Activated CD8-positive, alpha-beta T cell treated with anti-CD3 and anti-CD28 coated beads, Interleukin-2, amount 10 ng/mL, durations not matched to agents 7 days and 5 days (primary cell): ENCODE measurements at regions of chr2 and their contacts with region 1.

Region 1: GRCh38 chr2:170235860-170236679 is 58.1 kb downstream of the MYO3B start:
- DNase-seq: peak; percentile 36
- ATAC-seq: no peak
- H3K4me3 Mint-ChIP-seq: no peak overlapping the region
- H3K27ac Mint-ChIP-seq: no peak overlapping the region
- H3K4me1 Mint-ChIP-seq: no peaks in the 10 kb centered on the region
- H3K27me3 Mint-ChIP-seq: peaks cover 27% of the 10 kb centered on the region

Region 2: GRCh38 chr2:170208967-170209366 is 27.1 kb before region 1 on chr2:
- CTCF ChIA-PET with region 1: no interaction called
- POLR2A ChIA-PET with region 1: no interaction called
- DNase-seq: no peak
- ATAC-seq: no peak
- H3K4me3 Mint-ChIP-seq: no peak overlapping the region
- H3K27ac Mint-ChIP-seq: no peak overlapping the region
- H3K4me1 Mint-ChIP-seq: no peaks in the 10 kb centered on the region
- H3K27me3 Mint-ChIP-seq: peaks cover 12% of the 10 kb centered on the region

Region 3: GRCh38 chr2:170221317-170222288 is 14.5 kb before region 1 on chr2:
- CTCF ChIA-PET with region 1: interaction called, 11 read pairs
- POLR2A ChIA-PET with region 1: no interaction called
- DNase-seq: no peak
- ATAC-seq: no peak
- H3K4me3 Mint-ChIP-seq: no peak overlapping the region
- H3K27ac Mint-ChIP-seq: no peak overlapping the region
- H3K4me1 Mint-ChIP-seq: peaks cover 17% of the 10 kb centered on the region
- H3K27me3 Mint-ChIP-seq: peaks cover 11% of the 10 kb centered on the region